Mammary epithelial cell (primary cell): ENCODE measurements at regions of chr2 and their contacts with region 1.

Region 1: DNA sequence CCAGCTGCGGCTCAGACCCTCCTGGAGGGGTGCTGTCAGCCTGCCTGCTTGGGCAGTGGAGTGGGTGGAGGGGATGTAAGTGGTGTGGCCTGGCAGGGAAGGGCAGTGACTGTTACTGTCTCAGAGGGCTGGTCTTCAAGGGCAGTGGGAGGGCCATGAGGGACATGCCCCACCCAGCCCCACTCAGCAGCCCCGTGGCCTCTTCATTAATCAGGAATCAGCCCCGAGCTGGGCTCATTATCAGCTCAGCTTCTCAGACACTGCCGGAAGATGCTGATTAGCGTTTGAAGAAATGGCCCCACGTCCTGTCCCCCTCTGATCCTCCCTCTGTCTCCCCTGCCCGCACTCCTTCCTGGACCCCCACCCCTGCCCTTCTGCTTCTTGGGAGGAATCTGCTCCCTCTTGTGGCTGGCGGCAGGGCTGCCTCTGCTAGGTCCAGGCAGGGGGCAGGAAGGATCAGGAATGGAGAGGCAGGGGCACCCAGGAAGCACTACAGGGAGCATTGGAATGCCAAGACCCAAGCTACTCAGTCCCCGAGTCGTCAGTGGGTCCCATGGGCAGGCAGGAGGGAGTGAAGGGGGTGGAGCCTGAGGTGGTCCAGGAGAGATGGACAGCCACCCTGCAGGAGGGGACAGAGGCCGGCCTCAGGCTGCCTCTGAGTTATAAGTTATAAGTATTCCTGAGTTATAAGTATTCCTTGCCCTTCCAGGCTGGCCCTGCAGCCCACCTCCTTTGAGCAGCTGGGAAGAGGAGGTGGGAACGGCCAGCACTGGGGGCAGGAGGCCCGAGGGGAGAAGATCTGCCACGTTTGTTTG is 7.0 kb downstream of the ASIC4 start:
- DNase-seq: no peak
- H3K4me3 ChIP-seq: no peak overlapping the region
- H3K27ac ChIP-seq: no peak overlapping the region
- H3K4me1 ChIP-seq: peaks cover 17% of the 10 kb centered on the region
- H3K27me3 ChIP-seq: peaks cover under 1% of the 10 kb centered on the region
- CTCF ChIP-seq: peak; percentile 52 to 72

Region 2: DNA sequence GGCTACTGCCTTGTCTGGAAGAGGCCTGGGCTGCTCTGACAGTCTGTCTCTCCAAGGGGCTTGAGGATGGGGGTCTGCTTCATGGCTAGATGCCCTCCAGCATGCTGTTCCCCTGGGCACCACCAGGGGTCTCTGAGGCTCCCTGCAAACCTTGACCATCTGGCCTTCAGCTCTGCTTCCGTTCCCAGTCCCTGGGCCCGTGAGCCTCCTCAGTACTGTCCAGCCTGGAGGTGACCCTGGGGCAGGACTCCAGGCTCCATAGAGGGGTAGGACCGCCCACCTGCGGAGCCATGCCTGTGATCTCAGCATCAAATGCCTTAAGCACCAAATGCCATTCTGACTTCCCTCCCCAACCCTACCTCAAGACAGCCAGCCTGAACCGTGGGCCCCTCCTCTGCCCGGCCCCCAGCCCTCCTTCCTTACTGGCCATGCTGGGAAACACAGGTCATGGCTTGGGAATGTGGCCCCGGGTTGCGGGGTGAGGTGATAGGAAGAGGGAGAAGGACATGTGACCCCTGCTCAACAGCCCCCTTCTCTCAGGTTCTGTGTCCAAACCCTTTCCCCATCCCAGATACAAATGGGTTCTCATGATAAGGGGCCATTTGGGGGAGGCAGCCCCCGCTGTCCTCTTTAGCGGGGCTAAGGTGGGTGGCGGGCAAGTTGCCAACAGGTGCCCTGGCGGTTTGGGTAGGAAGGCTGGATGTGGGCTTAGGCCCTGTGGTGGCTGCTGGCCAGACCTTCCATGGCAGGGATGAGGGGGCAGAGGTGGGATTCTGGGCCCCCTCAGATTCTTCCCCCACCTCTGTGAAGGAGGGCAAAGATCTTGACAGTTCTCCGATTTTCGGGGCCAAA is 61.6 kb before region 1 on chr2:
- CTCF ChIA-PET with region 1: no interaction called
- dilution Hi-C with region 1: no loop called
- in situ Hi-C with region 1: no loop called
- intact Hi-C with region 1: loop called (anchors 2 kb)
- DNase-seq: peak; percentile 30
- H3K4me3 ChIP-seq: no peak overlapping the region
- H3K27ac ChIP-seq: no peak overlapping the region
- H3K4me1 ChIP-seq: peaks cover 49% of the 10 kb centered on the region
- H3K27me3 ChIP-seq: no peaks in the 10 kb centered on the region
- CTCF ChIP-seq: peak; percentile 93 to 97

Region 3: GRCh38 chr2:219509780-219510511 is 11.3 kb before region 1 on chr2:
- CTCF ChIA-PET with region 1: interaction called, 18 read pairs
- dilution Hi-C with region 1: no loop called
- in situ Hi-C with region 1: no loop called
- intact Hi-C with region 1: no loop called
- DNase-seq: no peak
- H3K4me3 ChIP-seq: no peak overlapping the region
- H3K27ac ChIP-seq: no peak overlapping the region
- H3K4me1 ChIP-seq: no peaks in the 10 kb centered on the region
- H3K27me3 ChIP-seq: peaks cover 5% of the 10 kb centered on the region
- CTCF ChIP-seq: peak; percentile 73 to 81

Region 4: GRCh38 chr2:219552382-219553167 is 31.3 kb after region 1 on chr2:
- CTCF ChIA-PET with region 1: no interaction called
- dilution Hi-C with region 1: no loop called
- in situ Hi-C with region 1: no loop called
- intact Hi-C with region 1: no loop called
- DNase-seq: peak; percentile 78
- H3K4me3 ChIP-seq: peak overlapping the region; percentile 57 to 80 (median 64)
- H3K27ac ChIP-seq: no peak overlapping the region
- H3K4me1 ChIP-seq: peaks cover 15% of the 10 kb centered on the region
- H3K27me3 ChIP-seq: no peaks in the 10 kb centered on the region
- CTCF ChIP-seq: no peak